ENCODE measurements at regions of chr17 and their contacts with region 1.

Region 1: DNA sequence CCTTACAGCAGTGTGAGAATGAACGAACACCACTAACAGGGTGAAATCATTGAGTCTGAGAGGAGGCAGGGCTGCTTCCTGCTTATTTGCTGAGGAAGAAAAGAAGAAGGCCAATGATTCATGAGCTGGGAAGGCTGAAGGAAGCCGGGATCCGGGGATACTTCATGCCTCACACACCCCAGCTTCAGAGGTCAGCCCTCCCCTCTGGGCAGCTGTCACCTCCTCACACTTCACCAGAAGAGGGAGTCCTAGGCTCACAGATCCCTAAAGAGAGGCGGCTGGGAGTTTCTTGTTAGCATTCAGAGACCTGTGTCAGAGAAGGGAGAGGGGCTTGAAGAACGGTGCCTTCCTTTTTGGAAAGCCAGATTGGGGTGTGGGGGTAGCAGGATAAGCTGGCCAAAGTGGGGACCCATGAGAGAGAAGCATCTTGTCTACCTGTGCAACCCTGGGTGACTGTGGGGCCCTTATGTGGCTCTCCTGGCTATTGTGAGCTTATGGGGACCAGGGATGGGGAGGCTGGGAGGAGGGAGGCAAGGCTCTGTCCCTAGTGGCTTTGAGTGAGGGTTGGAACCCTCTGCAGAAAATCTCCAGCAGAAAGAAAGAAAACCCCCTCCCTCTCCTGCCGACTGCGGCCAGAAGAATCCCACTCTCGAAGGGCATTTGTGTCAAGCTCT is 94.6 kb downstream of the RGS9 start:
- DNase-seq: peak; percentile 73 to 77 (median 76)
- ATAC-seq: peak; percentile 90
- H3K4me3 ChIP-seq: no peak overlapping the region
- H3K27ac ChIP-seq: no peak overlapping the region
- H3K4me1 ChIP-seq: peaks cover 12 to 22% of the 10 kb centered on the region in 2 experiments
- H3K27me3 ChIP-seq: peaks cover 10 to 16% of the 10 kb centered on the region in 2 experiments; a peak in 3 of 5 replicates
- CTCF ChIP-seq: peak; percentile 79 to 89 (median 88)
- EP300 ChIP-seq: no peak
- POLR2A ChIP-seq: no peak
- RAD21 ChIP-seq: peak; percentile 77 to 84

Region 2: GRCh38 chr17:65556014-65556909 is 324.5 kb after region 1 on chr17:
- CTCF ChIA-PET with region 1: no interaction called
- POLR2A ChIA-PET with region 1: no interaction called
- in situ Hi-C with region 1: no loop called
- intact Hi-C with region 1: loop called (anchors 2 kb)
- DNase-seq: peak; percentile 64 to 81 (median 71)
- ATAC-seq: peak; percentile 82
- H3K4me3 ChIP-seq: no peak overlapping the region
- H3K27ac ChIP-seq: no peak overlapping the region
- H3K4me1 ChIP-seq: peaks cover 0 to 15% of the 10 kb centered on the region in 2 experiments; a peak in 3 of 5 replicates
- H3K27me3 ChIP-seq: no peaks in the 10 kb centered on the region; a peak in 1 of 5 replicates
- CTCF ChIP-seq: peak; percentile 67 to 88 (median 75)
- EP300 ChIP-seq: no peak
- POLR2A ChIP-seq: no peak
- RAD21 ChIP-seq: peak; percentile 48 to 62

Region 3: GRCh38 chr17:65794572-65794971 is 562.8 kb after region 1 on chr17:
- CTCF ChIA-PET with region 1: no interaction called
- POLR2A ChIA-PET with region 1: no interaction called
- in situ Hi-C with region 1: no loop called
- intact Hi-C with region 1: loop called (anchors 5 kb)
- DNase-seq: peak; percentile 19 to 45 (median 37)
- ATAC-seq: 0 out of 3 replicates have a peak, but pooled peaks have one; percentile 53
- H3K4me3 ChIP-seq: no peak overlapping the region
- H3K27ac ChIP-seq: no peak overlapping the region
- H3K4me1 ChIP-seq: no peaks in the 10 kb centered on the region
- H3K27me3 ChIP-seq: no peaks in the 10 kb centered on the region
- CTCF ChIP-seq: peak; percentile 21 to 53 (median 49); a peak in 5 of 6 replicates
- EP300 ChIP-seq: no peak
- POLR2A ChIP-seq: no peak
- RAD21 ChIP-seq: peak; percentile 23 to 45; a peak in 3 of 4 replicates

Region 4: GRCh38 chr17:66165513-66166123 is 933.8 kb after region 1 on chr17:
- CTCF ChIA-PET with region 1: interaction called, 10 read pairs
- POLR2A ChIA-PET with region 1: no interaction called
- in situ Hi-C with region 1: loop called (anchors 5 kb)
- intact Hi-C with region 1: loop called (anchors 2 kb)
- DNase-seq: peak; percentile 30 to 61 (median 50)
- ATAC-seq: 0 out of 3 replicates have a peak, but pooled peaks have one; percentile 62
- H3K4me3 ChIP-seq: no peak overlapping the region
- H3K27ac ChIP-seq: no peak overlapping the region
- H3K4me1 ChIP-seq: no peaks in the 10 kb centered on the region
- H3K27me3 ChIP-seq: peaks cover 3% of the 10 kb centered on the region in 2 experiments; a peak in 1 of 5 replicates
- CTCF ChIP-seq: peak; percentile 55 to 82 (median 58); a peak in 5 of 6 replicates
- EP300 ChIP-seq: no peak
- POLR2A ChIP-seq: no peak
- RAD21 ChIP-seq: peak; percentile 91 to 93

Measured in K562 (cell line).